Activated CD4-positive, alpha-beta memory T cell treated with anti-CD3 and anti-CD28 coated beads, Interleukin-2, amount 10 ng/mL, durations not matched to agents 7 days and 5 days (primary cell): ENCODE measurements at regions of chr19 and their contacts with region 1.

Region 1: GRCh38 chr19:39970675-39971379 is at the start of gene PSMC4:
- DNase-seq: peak; percentile 99
- H3K4me3 Mint-ChIP-seq: peak within 1 kb of the TSS; percentile 89
- H3K27ac Mint-ChIP-seq: peak within 1 kb of the TSS; percentile 88
- H3K4me1 Mint-ChIP-seq: peaks cover 48% of the 10 kb centered on the region
- H3K27me3 Mint-ChIP-seq: no peaks in the 10 kb centered on the region
- total RNA-seq, gene PSMC4: 96.4 to 97.6 TPM

Region 2: GRCh38 chr19:39833464-39834286 is 137.2 kb before region 1 on chr19 and contains the start of gene DYRK1B:
- CTCF ChIA-PET with region 1: interaction called, 14 read pairs
- POLR2A ChIA-PET with region 1: interaction called, 5 read pairs
- DNase-seq: peak; percentile 97
- H3K4me3 Mint-ChIP-seq: peak within 1 kb of the TSS; percentile 65
- H3K27ac Mint-ChIP-seq: peak within 1 kb of the TSS; percentile 78
- H3K4me1 Mint-ChIP-seq: peaks cover 30% of the 10 kb centered on the region
- H3K27me3 Mint-ChIP-seq: no peaks in the 10 kb centered on the region
- total RNA-seq, gene DYRK1B: 13.8 to 14.2 TPM

Region 3: GRCh38 chr19:39889872-39890545 is 80.8 kb before region 1 on chr19:
- CTCF ChIA-PET with region 1: interaction called, 13 read pairs
- POLR2A ChIA-PET with region 1: no interaction called
- DNase-seq: no peak
- H3K4me3 Mint-ChIP-seq: no peak overlapping the region
- H3K27ac Mint-ChIP-seq: no peak overlapping the region
- H3K4me1 Mint-ChIP-seq: no peaks in the 10 kb centered on the region
- H3K27me3 Mint-ChIP-seq: no peaks in the 10 kb centered on the region

Region 4: GRCh38 chr19:39941615-39942365 is 29.0 kb before region 1 on chr19:
- CTCF ChIA-PET with region 1: interaction called, 59 read pairs
- POLR2A ChIA-PET with region 1: interaction called, 50 read pairs
- DNase-seq: peak; percentile 60
- H3K4me3 Mint-ChIP-seq: peak overlapping the region; percentile 51
- H3K27ac Mint-ChIP-seq: peak overlapping the region; percentile 80
- H3K4me1 Mint-ChIP-seq: peaks cover 59% of the 10 kb centered on the region
- H3K27me3 Mint-ChIP-seq: no peaks in the 10 kb centered on the region

Region 5: GRCh38 chr19:39996811-39997594 is 26.2 kb after region 1 on chr19 and contains the start of gene ZNF546:
- CTCF ChIA-PET with region 1: interaction called, 32 read pairs
- POLR2A ChIA-PET with region 1: interaction called, 54 read pairs
- DNase-seq: peak; percentile 94
- H3K4me3 Mint-ChIP-seq: peak within 1 kb of the TSS; percentile 99
- H3K27ac Mint-ChIP-seq: peak within 1 kb of the TSS; percentile 94
- H3K4me1 Mint-ChIP-seq: peaks cover 36% of the 10 kb centered on the region
- H3K27me3 Mint-ChIP-seq: no peaks in the 10 kb centered on the region
- total RNA-seq, gene ZNF546: 6.3 to 7.5 TPM

Region 6: GRCh38 chr19:40090241-40091204 is 119.7 kb after region 1 on chr19 and contains the start of gene ZNF780A:
- CTCF ChIA-PET with region 1: interaction called, 10 read pairs
- POLR2A ChIA-PET with region 1: interaction called, 31 read pairs
- DNase-seq: peak; percentile 82
- H3K4me3 Mint-ChIP-seq: peak within 1 kb of the TSS; percentile 100
- H3K27ac Mint-ChIP-seq: peak within 1 kb of the TSS; percentile 98
- H3K4me1 Mint-ChIP-seq: peaks cover 41% of the 10 kb centered on the region
- H3K27me3 Mint-ChIP-seq: peaks cover 2% of the 10 kb centered on the region
- total RNA-seq, gene ZNF780A: 21.3 to 25.3 TPM

Region 7: GRCh38 chr19:40103600-40103999 is 132.8 kb after region 1 on chr19:
- CTCF ChIA-PET with region 1: no interaction called
- POLR2A ChIA-PET with region 1: no interaction called
- DNase-seq: no peak
- H3K4me3 Mint-ChIP-seq: no peak overlapping the region
- H3K27ac Mint-ChIP-seq: no peak overlapping the region
- H3K4me1 Mint-ChIP-seq: no peaks in the 10 kb centered on the region
- H3K27me3 Mint-ChIP-seq: peaks cover 4% of the 10 kb centered on the region